Testis (tissue), 5 donors: ENCODE measurements at regions of chr9 and their contacts with region 1.

Region 1: DNA sequence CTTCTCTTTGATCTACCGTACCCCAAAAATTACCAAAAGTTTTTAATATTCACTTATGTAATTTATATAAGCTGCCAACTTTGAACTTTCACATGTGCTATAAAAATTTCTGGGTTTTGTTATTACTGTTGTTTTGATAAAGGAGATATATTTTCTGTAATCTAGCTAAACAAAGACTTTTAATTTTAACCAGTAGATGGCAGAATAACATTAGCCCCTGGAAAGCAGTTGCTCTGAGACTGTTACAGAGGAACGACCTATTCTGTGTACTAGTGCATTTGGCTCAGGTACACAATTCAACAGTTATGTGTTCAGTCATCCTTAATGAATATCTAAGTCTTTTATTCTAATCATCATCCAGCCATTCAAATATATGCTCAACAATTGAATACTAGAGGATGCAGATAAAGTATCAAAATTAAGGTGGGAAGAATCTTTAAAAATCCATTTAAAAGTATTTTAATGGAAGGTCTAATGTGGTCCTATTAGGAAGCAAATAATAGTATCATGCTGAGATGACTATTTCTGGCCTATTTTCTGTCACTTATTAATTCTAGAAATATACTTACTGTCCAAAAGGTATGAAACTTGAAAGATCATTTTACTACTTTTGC is 8.6 kb downstream of the KLHL9 start:
- DNase-seq: no peak
- H3K4me3 ChIP-seq: no peak overlapping the region
- H3K27ac ChIP-seq: no peak overlapping the region
- H3K4me1 ChIP-seq: peaks cover 7% of the 10 kb centered on the region
- H3K27me3 ChIP-seq: no peaks in the 10 kb centered on the region
- CTCF ChIP-seq: peak; percentile 26 to 65 (median 40)
- POLR2A ChIP-seq: no peak

Region 2: DNA sequence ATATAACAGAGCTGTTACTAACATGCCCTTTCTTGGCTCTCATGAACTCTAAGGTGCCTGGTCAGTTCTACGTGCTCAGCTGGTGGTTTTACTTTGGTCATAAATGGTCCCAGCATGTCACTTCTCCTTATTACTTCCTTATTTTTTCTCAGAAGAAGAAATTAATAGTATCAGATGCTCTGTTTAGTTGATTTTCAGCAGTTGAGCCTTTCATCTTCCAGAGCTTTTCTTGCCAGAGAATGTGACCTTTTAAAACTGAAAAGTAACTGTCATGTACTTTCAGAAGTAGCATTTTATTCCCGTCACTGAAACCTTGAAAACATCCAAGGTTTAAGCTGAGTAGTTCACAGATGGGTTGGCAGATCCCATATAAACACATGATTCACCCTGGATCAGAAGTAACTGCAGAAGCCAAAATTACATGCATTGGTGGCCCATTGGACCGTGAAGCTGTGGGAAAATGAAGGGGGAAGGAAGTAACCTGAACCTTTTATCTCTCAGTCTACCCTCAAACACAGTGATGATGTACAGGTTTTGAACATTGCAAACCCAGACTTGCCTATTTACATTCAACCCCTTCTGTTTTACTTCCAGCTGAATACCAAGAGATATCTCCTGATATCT is 345.7 kb before region 1 on chr9:
- intact Hi-C with region 1: no loop called
- DNase-seq: no peak
- H3K4me3 ChIP-seq: no peak overlapping the region
- H3K27ac ChIP-seq: peak overlapping the region in 1 of 2 donors; percentile 42
- H3K4me1 ChIP-seq: peaks cover 3% of the 10 kb centered on the region
- H3K27me3 ChIP-seq: no peaks in the 10 kb centered on the region
- CTCF ChIP-seq: no peak
- POLR2A ChIP-seq: no peak

Region 3: GRCh38 chr9:21367957-21368356 is 41.3 kb after region 1 on chr9 and contains the start of gene IFNA13:
- intact Hi-C with region 1: no loop called
- DNase-seq: no peak
- H3K4me3 ChIP-seq: no peak within 1 kb of the TSS
- H3K27ac ChIP-seq: no peak within 1 kb of the TSS
- H3K4me1 ChIP-seq: no peaks in the 10 kb centered on the region
- H3K27me3 ChIP-seq: no peaks in the 10 kb centered on the region
- CTCF ChIP-seq: no peak
- POLR2A ChIP-seq: no peak
- total RNA-seq, gene IFNA13: 0.63 to 1.9 TPM

Region 4: DNA sequence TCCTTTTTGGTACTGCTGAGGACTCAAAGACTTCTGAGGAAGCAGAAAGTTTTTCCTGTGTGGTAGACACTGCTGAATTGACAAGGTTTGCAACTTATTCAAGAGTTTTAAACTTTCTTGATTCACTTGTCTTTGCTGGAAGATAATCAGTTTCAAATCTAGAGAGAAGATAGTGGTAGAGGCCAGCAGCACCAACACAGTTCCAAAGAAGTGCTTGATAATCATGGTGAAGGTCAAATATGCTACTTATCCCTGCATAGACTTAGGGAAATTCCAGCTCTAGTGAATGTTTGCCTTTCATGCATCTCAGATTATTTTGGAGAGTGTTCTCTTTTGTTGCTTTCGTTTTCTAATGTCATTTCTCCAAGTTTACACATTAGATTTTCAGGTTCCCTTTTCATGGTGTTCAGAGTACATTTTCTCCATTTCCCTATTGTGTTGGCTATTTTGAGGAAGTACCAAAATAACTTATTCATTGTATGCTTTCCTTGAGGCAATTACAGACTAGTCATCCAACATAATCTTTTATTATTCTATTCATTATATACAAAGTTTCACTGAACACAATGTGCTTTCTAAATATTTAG is 154.9 kb after region 1 on chr9:
- intact Hi-C with region 1: no loop called
- DNase-seq: no peak
- H3K4me3 ChIP-seq: no peak overlapping the region
- H3K27ac ChIP-seq: no peak overlapping the region
- H3K4me1 ChIP-seq: no peaks in the 10 kb centered on the region
- H3K27me3 ChIP-seq: no peaks in the 10 kb centered on the region
- CTCF ChIP-seq: no peak
- POLR2A ChIP-seq: no peak

Region 5: GRCh38 chr9:21789541-21790037 is 463.0 kb after region 1 on chr9:
- intact Hi-C with region 1: loop called (anchors 10 kb)
- DNase-seq: peak; percentile 81
- H3K4me3 ChIP-seq: no peak overlapping the region
- H3K27ac ChIP-seq: no peak overlapping the region
- H3K4me1 ChIP-seq: no peaks in the 10 kb centered on the region
- H3K27me3 ChIP-seq: no peaks in the 10 kb centered on the region
- CTCF ChIP-seq: peak; percentile 78 to 84 (median 83)
- POLR2A ChIP-seq: no peak